Common myeloid progenitor, CD34-positive (primary cell): ENCODE measurements at regions of chr7 and their contacts with region 1.

Region 1: DNA sequence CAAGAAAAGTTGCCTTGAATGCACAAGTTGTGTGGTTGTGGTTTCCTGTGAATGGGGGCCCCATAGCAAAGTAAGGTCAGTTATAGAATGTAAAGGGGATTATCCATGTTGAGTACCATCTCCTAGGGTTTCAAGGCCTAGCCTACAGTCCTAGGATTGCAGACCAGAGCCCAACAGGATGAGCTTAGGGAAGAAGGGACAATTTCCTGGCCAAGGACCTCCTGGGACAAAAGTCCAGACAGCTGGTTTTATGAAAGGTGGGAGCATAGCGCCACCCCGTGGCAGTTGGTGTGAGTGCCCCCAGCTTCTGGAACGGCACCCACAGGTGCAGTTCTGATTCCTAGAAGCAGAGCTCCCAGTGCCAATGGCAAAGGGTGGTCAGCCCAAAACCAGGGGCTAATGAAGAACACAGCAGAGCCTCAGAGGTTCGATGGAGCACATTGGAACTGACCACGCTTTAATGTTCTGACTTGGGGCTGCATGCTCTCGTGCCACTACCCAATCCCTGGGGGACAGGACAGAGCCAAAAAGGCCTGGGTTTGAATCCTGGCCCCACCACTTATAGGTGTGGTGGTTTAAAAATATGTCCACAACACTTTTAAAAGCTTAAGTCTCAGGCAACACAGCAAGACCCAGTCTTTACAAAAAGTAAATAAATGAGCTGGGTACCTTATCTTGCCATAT is 25.8 kb upstream of the TMEM120A start:
- DNase-seq: peak; percentile 57 to 73 (median 63)
- H3K4me3 ChIP-seq: peak overlapping the region in 2 of 7 experiments; percentile 7 to 41
- H3K27ac ChIP-seq: no peak overlapping the region
- H3K4me1 ChIP-seq: peaks cover 3 to 21% (median 12%) of the 10 kb centered on the region in 4 experiments
- H3K27me3 ChIP-seq: no peaks in the 10 kb centered on the region

Region 2: DNA sequence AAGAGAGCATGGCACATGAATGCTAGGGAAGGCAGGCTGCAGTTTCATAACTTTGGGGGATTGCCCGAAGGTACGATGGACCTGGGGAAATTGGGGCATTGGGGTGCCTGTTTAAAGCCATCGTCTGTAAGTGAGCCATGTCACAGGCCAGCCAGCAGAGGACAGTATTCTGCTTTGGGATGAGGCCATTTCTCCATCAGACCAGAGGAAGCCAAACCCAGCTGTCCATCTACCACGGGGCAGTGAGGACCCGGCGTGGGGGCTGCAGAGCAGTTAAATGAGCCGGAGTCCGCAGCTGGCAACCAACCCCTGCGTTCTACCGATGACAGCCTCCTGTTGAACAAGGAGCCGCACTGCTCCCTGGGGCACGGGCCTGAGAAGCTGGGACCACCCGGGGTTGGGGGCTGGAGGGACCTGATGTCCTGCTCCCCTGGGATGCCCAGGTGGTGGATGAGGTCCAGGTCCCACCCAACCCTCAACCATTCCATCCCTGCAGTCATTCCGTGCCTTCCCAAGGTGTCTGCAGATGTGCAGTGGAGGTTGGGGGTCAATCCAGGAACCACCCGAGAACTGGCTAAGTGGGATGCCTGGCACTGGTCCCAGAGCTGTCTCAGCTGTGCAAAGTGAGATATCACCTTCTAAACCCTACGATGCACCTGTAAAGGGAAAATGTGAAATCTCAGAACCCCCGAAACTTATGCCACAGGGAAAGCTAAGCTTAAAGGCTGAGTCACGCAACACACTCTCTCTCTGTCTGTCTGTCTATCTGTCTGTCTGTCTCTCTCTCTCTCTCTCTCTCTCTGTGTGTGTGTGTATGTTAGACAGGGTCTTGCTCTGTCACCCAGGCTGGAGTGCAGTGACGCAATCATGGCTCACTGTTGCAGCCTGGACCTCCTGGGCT is 153.4 kb before region 1 on chr7:
- CTCF ChIA-PET with region 1: interaction called, 78 read pairs
- POLR2A ChIA-PET with region 1: no interaction called
- DNase-seq: peak; percentile 59 to 77 (median 73)
- H3K4me3 ChIP-seq: no peak overlapping the region
- H3K27ac ChIP-seq: no peak overlapping the region
- H3K4me1 ChIP-seq: peaks cover 0 to 5% (median 0%) of the 10 kb centered on the region in 4 experiments
- H3K27me3 ChIP-seq: peaks cover 0 to 2% (median 0%) of the 10 kb centered on the region in 5 experiments

Region 3: DNA sequence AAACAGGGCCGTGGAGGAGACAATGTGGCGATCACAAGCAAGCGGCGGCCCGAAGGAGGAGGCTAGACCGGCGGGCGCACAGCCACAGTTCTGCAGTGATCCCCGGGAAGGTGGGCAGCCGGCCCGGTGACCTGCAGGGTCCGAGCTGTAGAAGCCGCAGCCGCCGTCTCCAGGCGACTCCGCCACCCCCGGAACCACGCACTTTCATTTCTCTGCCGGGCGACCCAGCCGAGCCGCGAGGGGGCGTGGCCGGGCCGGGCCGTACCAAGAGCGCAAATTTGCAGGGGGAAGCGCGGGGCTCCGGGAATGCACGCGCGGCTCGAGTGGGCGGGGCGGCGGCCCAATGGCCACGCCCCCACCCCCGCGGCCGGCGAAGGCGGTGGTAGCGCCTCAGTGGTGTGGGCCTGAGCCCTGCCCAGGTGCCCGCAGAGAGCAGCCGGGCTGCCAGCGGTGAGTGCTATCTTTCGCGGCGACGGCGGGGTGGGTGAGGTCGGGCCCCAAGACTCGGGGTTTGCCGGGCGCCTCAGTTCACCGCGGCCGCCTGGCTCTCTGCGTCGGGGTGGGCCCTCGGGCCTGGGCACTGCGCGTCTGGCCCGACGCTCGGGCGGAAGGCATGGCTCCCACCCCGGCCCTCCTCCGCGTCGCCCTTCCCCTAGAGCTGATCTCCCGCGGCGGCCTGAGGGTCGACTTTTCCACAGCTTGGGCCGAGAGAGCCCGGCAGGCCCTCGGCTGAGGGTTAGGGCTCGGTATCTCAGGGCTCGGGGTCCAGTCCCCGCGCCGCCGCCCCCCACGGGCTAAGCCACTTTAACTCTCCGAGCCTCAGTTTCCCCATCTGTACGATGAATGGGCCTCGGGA is 105.2 kb before region 1 on chr7 and contains the start of gene POR:
- CTCF ChIA-PET with region 1: interaction called, 10 read pairs
- POLR2A ChIA-PET with region 1: interaction called, 3 read pairs
- DNase-seq: peak; percentile 92 to 97 (median 96)
- H3K4me3 ChIP-seq: peak within 1 kb of the TSS; percentile 61 to 84 (median 77)
- H3K27ac ChIP-seq: peak within 1 kb of the TSS; percentile 61 to 85
- H3K4me1 ChIP-seq: peaks cover 5 to 18% (median 14%) of the 10 kb centered on the region in 4 experiments
- H3K27me3 ChIP-seq: no peaks in the 10 kb centered on the region

Region 4: GRCh38 chr7:76037310-76037709 is 17.1 kb after region 1 on chr7:
- CTCF ChIA-PET with region 1: interaction called, 21 read pairs
- POLR2A ChIA-PET with region 1: no interaction called
- DNase-seq: no peak
- H3K4me3 ChIP-seq: no peak overlapping the region
- H3K27ac ChIP-seq: no peak overlapping the region
- H3K4me1 ChIP-seq: no peaks in the 10 kb centered on the region
- H3K27me3 ChIP-seq: no peaks in the 10 kb centered on the region

Region 5: DNA sequence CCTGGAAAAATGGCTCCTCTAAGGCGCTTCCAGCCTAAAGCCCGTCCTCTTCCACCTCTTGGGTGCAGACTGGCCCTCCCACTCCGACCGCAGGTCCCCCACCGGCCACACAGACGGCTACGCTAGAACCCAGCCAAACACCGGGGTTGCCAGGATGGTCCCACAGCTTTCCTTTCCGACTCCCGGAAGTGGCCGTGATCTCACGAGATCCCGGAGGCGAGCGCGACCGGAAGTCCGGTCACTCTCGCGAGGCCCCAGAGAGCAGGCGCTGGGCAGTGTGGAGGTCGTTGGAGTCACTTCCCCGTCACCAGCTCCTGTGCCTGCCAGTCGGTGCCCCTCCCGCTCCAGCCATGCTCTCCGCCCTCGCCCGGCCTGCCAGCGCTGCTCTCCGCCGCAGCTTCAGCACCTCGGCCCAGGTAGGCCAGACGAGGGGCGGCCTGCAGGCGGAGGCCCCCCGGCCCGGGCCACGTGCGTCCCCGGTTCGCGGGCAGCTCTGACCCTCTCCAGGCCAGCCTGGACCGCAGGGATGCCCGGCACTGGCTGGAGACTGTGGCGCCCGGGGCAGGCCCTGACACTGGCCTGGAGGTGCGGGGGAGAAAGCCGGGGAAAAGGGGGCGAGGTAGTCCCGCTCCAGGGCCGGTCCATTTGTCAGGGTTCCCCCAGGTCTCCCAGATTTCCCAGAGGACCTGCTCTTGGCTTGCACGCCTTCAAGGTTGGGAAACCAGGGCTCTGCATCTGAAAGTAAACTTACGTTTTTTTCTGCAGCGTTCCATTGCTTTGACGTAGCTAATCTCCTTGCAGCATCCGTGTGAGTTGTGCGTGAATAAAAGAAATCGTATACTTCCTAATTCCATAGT is 27.9 kb after region 1 on chr7 and contains the starts of genes MDH2 and STYXL1:
- CTCF ChIA-PET with region 1: interaction called, 12 read pairs
- POLR2A ChIA-PET with region 1: no interaction called
- DNase-seq: peak; percentile 91 to 94 (median 94)
- H3K4me3 ChIP-seq: peak within 1 kb of the TSS; percentile 79 to 99 (median 97)
- H3K27ac ChIP-seq: peak within 1 kb of the TSS; percentile 95 to 96
- H3K4me1 ChIP-seq: peaks cover 4 to 23% (median 16%) of the 10 kb centered on the region in 4 experiments
- H3K27me3 ChIP-seq: no peaks in the 10 kb centered on the region